Aorta (tissue), 5 donors: ENCODE measurements at regions of chr5 and their contacts with region 1.

Region 1: GRCh38 chr5:149317281-149318048 is 27.8 kb upstream of the GRPEL2 start:
- DNase-seq: no peak
- ATAC-seq: no peak
- H3K4me3 ChIP-seq: no peak overlapping the region
- H3K27ac ChIP-seq: no peak overlapping the region
- H3K4me1 ChIP-seq: no peaks in the 10 kb centered on the region
- H3K27me3 ChIP-seq: no peaks in the 10 kb centered on the region

Region 2: DNA sequence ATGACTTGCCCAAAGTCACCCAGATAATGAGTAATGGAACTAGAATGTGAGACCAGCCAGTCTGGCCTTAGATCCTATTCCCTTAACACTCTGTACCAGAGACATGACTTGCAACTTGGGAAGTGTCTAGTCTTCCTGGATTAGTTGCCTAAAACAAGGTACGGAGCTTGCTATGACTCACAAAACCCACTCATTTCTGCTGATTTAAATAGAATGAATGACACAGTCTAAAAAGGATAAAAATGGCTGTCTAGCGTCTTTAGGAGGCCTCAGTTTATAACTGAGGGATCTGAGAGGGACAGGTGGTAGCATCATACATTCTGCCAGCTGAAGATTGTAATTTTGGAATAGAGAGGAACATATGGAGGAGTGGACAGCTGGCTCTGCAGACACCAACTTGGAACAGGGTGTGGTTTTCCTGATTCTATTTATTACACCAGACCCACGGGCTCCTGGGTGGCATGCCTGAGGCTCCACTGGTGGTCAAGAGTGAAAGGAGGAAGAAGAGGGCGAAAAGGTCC is 113.5 kb before region 1 on chr5:
- intact Hi-C with region 1: no loop called
- DNase-seq: no peak
- ATAC-seq: no peak
- H3K4me3 ChIP-seq: no peak overlapping the region
- H3K27ac ChIP-seq: no peak overlapping the region
- H3K4me1 ChIP-seq: no peaks in the 10 kb centered on the region
- H3K27me3 ChIP-seq: no peaks in the 10 kb centered on the region

Region 3: DNA sequence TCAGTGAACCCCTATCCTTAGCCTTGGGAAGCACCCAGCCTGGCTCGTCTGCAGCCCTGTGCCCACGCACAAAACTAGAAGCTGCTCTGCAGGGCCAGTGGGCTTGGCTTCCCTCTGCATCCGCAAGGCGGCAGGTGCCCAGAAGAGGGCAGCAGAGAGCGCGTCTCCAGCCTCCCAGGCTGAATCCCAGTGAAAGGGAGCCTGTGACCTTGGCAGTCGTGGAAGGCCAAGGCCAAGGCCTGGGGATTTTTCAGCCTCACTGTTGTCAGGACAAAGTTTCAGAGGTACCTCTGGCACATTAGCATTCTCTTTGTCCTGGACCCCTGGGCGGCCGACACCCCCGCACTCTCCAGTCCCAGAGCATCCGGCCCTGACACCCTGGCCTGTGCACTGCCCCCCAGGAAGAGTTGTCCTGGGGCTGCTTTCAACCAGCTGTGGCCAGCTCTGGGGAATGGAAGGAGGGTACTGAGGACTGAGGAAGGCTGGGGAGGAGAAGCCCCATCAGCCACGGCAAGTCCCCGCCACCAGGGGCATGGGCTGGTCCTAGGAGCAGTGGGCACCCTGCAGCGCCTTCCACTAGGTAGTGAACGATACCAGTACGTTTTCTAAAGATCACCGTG is 125.2 kb after region 1 on chr5:
- intact Hi-C with region 1: loop called in 1 of 2 experiments (anchors 5 kb)
- DNase-seq: peak; percentile 83 to 96
- ATAC-seq: peak; percentile 85
- H3K4me3 ChIP-seq: no peak overlapping the region
- H3K27ac ChIP-seq: peak overlapping the region in 1 of 2 donors; percentile 15
- H3K4me1 ChIP-seq: no peaks in the 10 kb centered on the region
- H3K27me3 ChIP-seq: no peaks in the 10 kb centered on the region

Region 4: GRCh38 chr5:149567226-149567625 is 249.8 kb after region 1 on chr5:
- intact Hi-C with region 1: loop called (anchors 5 to 10 kb)
- DNase-seq: no peak
- ATAC-seq: no peak
- H3K4me3 ChIP-seq: no peak overlapping the region
- H3K27ac ChIP-seq: no peak overlapping the region
- H3K4me1 ChIP-seq: no peaks in the 10 kb centered on the region
- H3K27me3 ChIP-seq: no peaks in the 10 kb centered on the region

Region 5: DNA sequence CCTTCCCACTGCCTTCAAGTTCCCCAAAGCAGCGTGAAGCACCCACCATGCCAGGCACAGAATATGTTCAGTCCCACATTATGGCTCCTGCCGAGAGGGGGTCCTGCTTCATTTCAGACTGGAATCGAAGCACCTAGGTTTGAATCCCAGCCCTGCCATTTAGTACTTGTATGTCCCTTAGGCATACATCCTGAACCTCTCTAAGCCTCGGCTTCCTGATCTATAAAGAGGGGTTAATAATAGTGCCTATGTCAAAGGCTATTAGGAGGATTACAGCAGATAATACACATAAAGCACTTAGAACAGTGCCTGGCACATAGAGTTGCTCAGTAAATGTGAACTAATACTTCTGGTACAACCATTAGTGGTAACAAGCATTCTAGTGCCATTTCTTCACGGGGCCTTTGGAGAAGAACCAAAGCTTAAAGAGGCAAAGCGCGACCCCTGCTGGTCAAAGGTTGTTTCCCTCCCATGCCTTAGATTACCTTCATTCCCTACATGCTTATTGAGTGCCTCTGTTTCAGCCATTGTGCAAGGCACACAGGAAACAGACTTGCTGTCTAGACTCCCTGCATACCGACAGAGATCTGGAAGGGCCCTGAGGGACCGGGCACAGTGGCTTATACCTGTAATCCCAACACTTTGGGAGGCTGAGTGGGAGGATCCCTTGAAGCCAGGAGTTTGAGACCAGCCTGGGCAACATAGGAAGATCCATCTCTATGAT is 510.9 kb after region 1 on chr5:
- intact Hi-C with region 1: no loop called
- DNase-seq: peak; percentile 90 to 94
- ATAC-seq: peak; percentile 73
- H3K4me3 ChIP-seq: no peak overlapping the region
- H3K27ac ChIP-seq: no peak overlapping the region
- H3K4me1 ChIP-seq: no peaks in the 10 kb centered on the region
- H3K27me3 ChIP-seq: no peaks in the 10 kb centered on the region